K562 (cell line): ENCODE measurements at regions of chr1 and their contacts with region 1.

Region 1: GRCh38 chr1:205430696-205431305 is 8.9 kb upstream of the LEMD1 start:
- DNase-seq: peak; percentile 77 to 89 (median 82)
- ATAC-seq: peak; percentile 95
- H3K4me3 ChIP-seq: peak overlapping the region; percentile 46
- H3K27ac ChIP-seq: no peak overlapping the region
- H3K4me1 ChIP-seq: peaks cover 6% of the 10 kb centered on the region in 2 experiments; a peak in 4 of 5 replicates
- H3K27me3 ChIP-seq: peaks cover 21 to 60% of the 10 kb centered on the region in 2 experiments; a peak in 4 of 5 replicates
- CTCF ChIP-seq: peak; percentile 92 to 100 (median 93)
- EP300 ChIP-seq: no peak
- POLR2A ChIP-seq: no peak
- RAD21 ChIP-seq: peak; percentile 64 to 73

Region 2: DNA sequence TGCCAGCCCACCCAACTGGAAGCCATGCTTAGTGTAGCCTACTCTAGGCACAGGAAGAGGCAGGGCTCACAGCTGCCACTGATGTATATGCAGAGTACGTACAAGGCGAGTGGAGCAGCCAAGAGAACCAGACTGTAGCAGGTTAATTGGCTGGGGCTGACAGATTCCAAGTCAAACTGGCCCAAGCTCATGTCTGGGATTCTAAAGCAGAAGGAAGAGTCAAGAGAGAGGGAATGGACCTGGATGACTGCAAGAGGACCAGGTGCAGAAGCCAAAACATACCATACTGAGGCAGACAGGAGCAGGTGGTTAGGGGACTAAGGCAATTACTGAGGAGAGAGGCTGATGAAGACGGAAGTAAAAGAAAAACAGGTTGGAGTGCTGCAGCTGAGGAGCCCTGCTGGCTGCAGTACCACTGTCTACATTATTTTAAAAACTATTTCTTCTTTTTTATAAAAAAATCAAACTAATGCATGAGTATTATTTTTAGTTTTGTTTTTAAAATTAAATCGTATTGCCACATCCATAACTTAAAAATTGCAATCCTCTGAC is 693.9 kb before region 1 on chr1:
- CTCF ChIA-PET with region 1: no interaction called
- POLR2A ChIA-PET with region 1: no interaction called
- in situ Hi-C with region 1: no loop called
- intact Hi-C with region 1: no loop called
- DNase-seq: no peak
- ATAC-seq: peak; percentile 54
- H3K4me3 ChIP-seq: no peak overlapping the region
- H3K27ac ChIP-seq: no peak overlapping the region
- H3K4me1 ChIP-seq: no peaks in the 10 kb centered on the region; a peak in 1 of 5 replicates
- H3K27me3 ChIP-seq: peaks cover 11 to 36% of the 10 kb centered on the region in 2 experiments
- CTCF ChIP-seq: no peak
- EP300 ChIP-seq: no peak
- POLR2A ChIP-seq: no peak
- RAD21 ChIP-seq: no peak

Region 3: GRCh38 chr1:205144751-205145150 is 286.1 kb before region 1 on chr1:
- CTCF ChIA-PET with region 1: no interaction called
- POLR2A ChIA-PET with region 1: no interaction called
- in situ Hi-C with region 1: no loop called
- intact Hi-C with region 1: no loop called
- DNase-seq: no peak
- ATAC-seq: no peak
- H3K4me3 ChIP-seq: no peak overlapping the region
- H3K27ac ChIP-seq: no peak overlapping the region
- H3K4me1 ChIP-seq: peaks cover 3 to 10% of the 10 kb centered on the region in 2 experiments; a peak in 3 of 5 replicates
- H3K27me3 ChIP-seq: no peaks in the 10 kb centered on the region
- CTCF ChIP-seq: no peak
- EP300 ChIP-seq: no peak
- POLR2A ChIP-seq: no peak
- RAD21 ChIP-seq: no peak

Region 4: GRCh38 chr1:205396967-205397616 is 33.7 kb before region 1 on chr1:
- CTCF ChIA-PET with region 1: interaction called, 4 read pairs
- POLR2A ChIA-PET with region 1: no interaction called
- in situ Hi-C with region 1: no loop called
- intact Hi-C with region 1: loop called (anchors 2 kb)
- DNase-seq: peak; percentile 68 to 76 (median 70)
- ATAC-seq: peak; percentile 86
- H3K4me3 ChIP-seq: no peak overlapping the region
- H3K27ac ChIP-seq: no peak overlapping the region
- H3K4me1 ChIP-seq: no peaks in the 10 kb centered on the region
- H3K27me3 ChIP-seq: no peaks in the 10 kb centered on the region; a peak in 1 of 5 replicates
- CTCF ChIP-seq: peak; percentile 86 to 97 (median 91)
- EP300 ChIP-seq: no peak
- POLR2A ChIP-seq: no peak
- RAD21 ChIP-seq: peak; percentile 94 to 98